ENCODE measurements at regions of chr15 and their contacts with region 1.

Region 1: DNA sequence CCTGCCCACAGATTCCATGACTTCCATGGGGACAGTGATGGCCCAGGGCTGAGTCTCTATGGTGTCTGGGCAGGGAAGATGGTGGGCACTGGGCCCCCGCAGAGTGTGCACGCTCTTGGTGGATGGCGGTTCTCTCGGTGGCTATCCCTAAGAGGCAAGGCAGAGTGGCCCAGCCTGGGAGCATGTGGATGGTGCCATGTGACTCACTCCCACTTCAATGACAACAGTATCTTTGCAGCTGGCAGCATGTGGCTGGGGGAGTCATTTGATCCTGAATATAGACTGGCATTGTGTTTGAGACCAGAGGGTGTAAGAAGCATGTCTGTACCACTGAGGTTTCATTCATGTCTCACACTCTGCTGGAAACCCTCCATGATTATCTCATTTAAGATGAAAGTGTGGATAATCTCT is 101.2 kb downstream of the CORO2B start:
- DNase-seq: peak in 9 of 10 donors; percentile 76 to 97 (median 88)
- H3K4me3 ChIP-seq: peak overlapping the region in 2 of 59 donors; percentile 5 to 15
- H3K27ac ChIP-seq: peak overlapping the region; percentile 40 to 98 (median 88)
- H3K27me3 ChIP-seq: no peaks in the 10 kb centered on the region
- CTCF ChIP-seq: peak in 14 of 56 donors; percentile 9 to 37 (median 14)

Region 2: DNA sequence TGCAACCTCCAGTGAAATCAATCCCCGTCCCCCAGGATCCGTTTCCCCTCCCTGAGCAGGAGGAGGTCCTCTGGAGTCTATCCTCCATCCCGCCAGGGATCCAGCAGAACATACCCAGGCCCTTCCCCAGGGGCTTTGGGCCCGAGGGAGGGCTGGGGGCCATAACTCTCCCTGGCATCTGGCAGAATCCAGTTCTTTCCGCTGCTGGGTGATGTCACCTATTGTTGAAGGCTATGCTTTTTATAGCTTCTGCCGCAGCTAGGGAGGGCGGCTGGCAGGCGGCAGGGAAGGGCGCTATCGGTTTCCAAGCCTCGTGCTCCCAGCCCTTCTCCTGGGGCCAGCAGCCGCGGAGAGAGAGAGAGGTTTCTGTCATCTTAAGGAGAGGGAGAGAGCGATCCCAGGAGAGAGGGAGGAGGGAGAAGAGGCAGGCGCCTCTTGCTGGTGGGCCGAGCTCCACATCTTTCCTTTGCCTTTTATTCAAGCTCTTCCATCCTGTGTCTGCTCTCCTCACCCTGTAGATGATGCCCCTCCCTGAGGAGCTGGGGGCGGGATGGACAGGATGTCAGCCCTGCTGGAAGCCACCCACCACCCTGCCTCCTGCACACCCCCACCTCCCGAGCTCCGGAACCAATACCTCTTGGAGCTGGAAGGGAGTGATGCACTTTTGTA is 20.6 kb after region 1 on chr15:
- intact Hi-C with region 1: loop called in 1 of 2 experiments (anchors 1 kb)
- DNase-seq: peak; percentile 46 to 87 (median 79)
- H3K4me3 ChIP-seq: peak overlapping the region in 57 of 59 donors; percentile 1 to 52 (median 31)
- H3K27ac ChIP-seq: peak overlapping the region; percentile 86 to 100 (median 98)
- H3K27me3 ChIP-seq: no peaks in the 10 kb centered on the region
- CTCF ChIP-seq: peak in 23 of 56 donors; percentile 9 to 35 (median 25)